Posterior vena cava (tissue), 2 donors: ENCODE measurements at regions of chr10 and their contacts with region 1.

Region 1: GRCh38 chr10:71761541-71762394 is 11.6 kb downstream of the VSIR start:
- DNase-seq: no peak

Region 2: DNA sequence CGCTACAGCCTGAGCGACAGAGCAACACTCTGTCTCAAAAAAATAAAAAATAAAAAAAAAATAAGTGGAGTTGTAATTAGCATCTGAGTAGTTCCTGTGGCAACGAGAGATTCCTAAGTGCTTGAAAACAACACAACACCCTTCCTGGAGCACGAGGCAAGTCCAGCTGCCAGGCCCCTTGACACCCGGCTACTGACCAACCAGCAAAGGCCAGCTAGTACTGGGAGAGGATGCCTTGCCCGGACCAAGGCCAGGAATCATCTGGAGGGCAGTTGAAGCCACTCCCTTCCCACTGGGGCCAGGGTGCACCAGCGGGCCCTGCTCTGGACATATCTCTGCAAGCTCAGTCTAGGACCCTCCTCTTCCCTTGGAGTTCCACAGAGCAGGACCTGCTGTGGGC is 42.7 kb before region 1 on chr10:
- intact Hi-C with region 1: loop called in 1 of 2 experiments (anchors 5 kb)
- DNase-seq: peak; percentile 93